K562 (cell line): ENCODE measurements at regions of chr4 and their contacts with region 1.

Region 1: GRCh38 chr4:1726146-1726934 is 5.0 kb downstream of the TACC3 start:
- DNase-seq: peak; percentile 54 to 91 (median 66)
- ATAC-seq: peak; percentile 72
- H3K4me3 ChIP-seq: no peak overlapping the region
- H3K27ac ChIP-seq: no peak overlapping the region
- H3K4me1 ChIP-seq: peaks cover 10 to 48% of the 10 kb centered on the region in 2 experiments; a peak in 4 of 5 replicates
- H3K27me3 ChIP-seq: no peaks in the 10 kb centered on the region
- CTCF ChIP-seq: peak; percentile 80 to 99 (median 92)
- EP300 ChIP-seq: no peak
- POLR2A ChIP-seq: no peak
- RAD21 ChIP-seq: peak; percentile 57 to 68

Region 2: DNA sequence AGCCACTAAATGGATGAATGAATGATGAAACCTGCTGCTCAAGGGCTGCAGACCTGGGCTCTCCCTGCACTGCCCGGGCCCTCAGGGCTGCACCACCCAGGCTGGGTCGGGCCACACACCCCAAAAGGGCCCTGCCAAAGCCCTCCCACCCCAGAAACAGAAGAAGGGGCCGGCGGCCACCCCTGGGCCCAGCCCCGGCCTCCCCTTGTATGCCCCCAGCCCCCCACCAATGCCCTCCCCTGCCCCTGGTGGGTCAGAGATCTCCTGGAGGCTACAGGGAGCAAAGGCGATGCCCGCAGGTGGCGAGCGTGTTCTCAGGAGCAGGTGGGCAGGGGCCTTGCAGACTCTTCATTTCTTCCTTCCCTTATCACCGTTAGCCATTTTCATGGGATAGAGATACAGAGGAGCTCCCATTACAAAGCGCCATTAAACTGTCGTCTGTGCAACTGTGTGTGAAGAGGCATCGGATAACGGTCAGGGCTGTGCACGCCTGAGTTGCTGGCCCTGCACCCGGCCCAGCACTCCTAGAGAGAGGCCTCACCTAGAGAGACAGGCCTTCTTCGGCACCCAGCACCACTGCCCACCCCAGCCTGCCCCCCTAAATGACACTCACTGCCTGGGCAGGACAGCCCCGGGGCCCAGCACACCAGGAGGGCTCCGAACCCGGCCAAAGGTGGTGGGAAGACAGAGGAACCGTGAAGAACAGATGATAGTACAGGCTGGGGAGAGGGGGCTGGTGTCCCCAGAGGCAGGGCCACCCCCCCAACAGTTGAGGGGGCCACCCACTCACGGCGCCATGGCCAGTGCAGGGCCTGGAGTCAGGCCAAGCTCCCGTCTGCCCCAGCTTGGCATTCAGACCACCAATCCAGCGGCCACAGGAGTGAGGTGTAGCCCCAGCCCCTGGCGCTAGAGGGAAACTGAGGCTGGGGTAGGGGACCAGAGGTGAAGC is 175.9 kb before region 1 on chr4:
- CTCF ChIA-PET with region 1: no interaction called
- POLR2A ChIA-PET with region 1: no interaction called
- in situ Hi-C with region 1: no loop called
- intact Hi-C with region 1: no loop called
- DNase-seq: no peak
- ATAC-seq: peak; percentile 32; the same call in 2 of the 3 replicates
- H3K4me3 ChIP-seq: no peak overlapping the region
- H3K27ac ChIP-seq: no peak overlapping the region
- H3K4me1 ChIP-seq: peaks cover 0 to 42% of the 10 kb centered on the region in 2 experiments; a peak in 2 of 5 replicates
- H3K27me3 ChIP-seq: peaks cover 3 to 48% of the 10 kb centered on the region in 2 experiments; a peak in 4 of 5 replicates
- CTCF ChIP-seq: no peak
- EP300 ChIP-seq: no peak
- POLR2A ChIP-seq: no peak
- RAD21 ChIP-seq: no peak

Region 3: DNA sequence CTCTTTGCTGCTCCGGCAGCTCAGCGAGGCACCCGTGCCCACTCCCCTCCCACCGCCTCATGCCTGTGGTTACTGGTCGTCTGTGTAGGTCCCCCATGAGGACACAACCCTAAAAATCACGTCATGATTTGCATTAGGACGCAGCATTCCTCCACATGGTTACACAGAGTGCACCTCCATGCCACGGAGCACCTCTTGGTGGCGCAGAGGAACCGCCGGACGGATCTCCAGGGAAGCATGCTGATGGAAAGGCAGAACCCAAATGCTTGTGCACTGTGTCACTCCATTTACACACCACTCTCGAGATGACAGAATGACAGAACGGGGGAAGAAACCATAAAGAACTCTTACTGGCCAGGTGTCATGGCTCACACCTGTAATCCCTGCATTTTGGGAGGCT is 64.6 kb before region 1 on chr4:
- CTCF ChIA-PET with region 1: interaction called, 3 read pairs
- POLR2A ChIA-PET with region 1: interaction called, 3 read pairs
- in situ Hi-C with region 1: no loop called
- intact Hi-C with region 1: loop called (anchors 2 kb)
- DNase-seq: peak in 2 of 4 experiments; percentile 40 to 48
- ATAC-seq: peak; percentile 75
- H3K4me3 ChIP-seq: no peak overlapping the region
- H3K27ac ChIP-seq: no peak overlapping the region; the same call in 2 of the 3 replicates
- H3K4me1 ChIP-seq: peaks cover 0 to 27% of the 10 kb centered on the region in 2 experiments; a peak in 2 of 5 replicates
- H3K27me3 ChIP-seq: no peaks in the 10 kb centered on the region
- CTCF ChIP-seq: peak; percentile 37 to 58 (median 39); a peak in 3 of 6 replicates
- EP300 ChIP-seq: no peak
- POLR2A ChIP-seq: no peak
- RAD21 ChIP-seq: peak in 1 of 2 experiments; percentile 34; a peak in 1 of 4 replicates

Region 4: DNA sequence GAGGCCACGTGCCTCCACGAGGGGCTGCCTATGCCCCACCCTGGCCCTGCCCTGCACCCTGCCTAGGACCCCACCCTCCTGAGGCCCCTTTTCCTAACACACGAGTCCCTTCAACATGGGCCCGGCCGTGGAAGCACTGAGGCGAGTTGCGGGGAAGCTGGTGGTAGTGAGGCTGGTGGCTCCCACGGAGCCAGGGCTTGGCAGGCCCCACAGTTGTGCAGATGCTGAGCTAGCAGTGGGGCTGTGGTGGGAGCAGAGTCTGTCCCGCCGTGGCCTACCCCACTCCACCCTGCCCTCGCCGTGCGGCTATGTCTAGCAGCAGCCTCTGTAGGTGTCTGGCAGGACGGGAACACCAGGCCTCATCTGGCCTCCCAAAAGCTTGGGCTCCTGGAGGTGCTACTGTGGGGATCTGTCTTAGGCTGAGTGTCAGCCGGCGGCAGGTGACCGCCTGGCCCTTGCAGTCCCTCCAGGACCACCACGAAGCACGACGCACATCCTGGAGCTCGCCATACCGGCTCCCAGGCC is 13.7 kb after region 1 on chr4:
- CTCF ChIA-PET with region 1: no interaction called
- POLR2A ChIA-PET with region 1: interaction called, 11 read pairs
- in situ Hi-C with region 1: no loop called
- intact Hi-C with region 1: no loop called
- DNase-seq: no peak
- ATAC-seq: no peak
- H3K4me3 ChIP-seq: no peak overlapping the region
- H3K27ac ChIP-seq: no peak overlapping the region
- H3K4me1 ChIP-seq: peaks cover 0 to 24% of the 10 kb centered on the region in 2 experiments; a peak in 2 of 5 replicates
- H3K27me3 ChIP-seq: no peaks in the 10 kb centered on the region
- CTCF ChIP-seq: no peak
- EP300 ChIP-seq: no peak
- POLR2A ChIP-seq: no peak
- RAD21 ChIP-seq: no peak